Activated B cell treated with CpG ODN at 0.5 μM for 24 hours (primary cell): ENCODE measurements at regions of chr6 and their contacts with region 1.

Region 1: DNA sequence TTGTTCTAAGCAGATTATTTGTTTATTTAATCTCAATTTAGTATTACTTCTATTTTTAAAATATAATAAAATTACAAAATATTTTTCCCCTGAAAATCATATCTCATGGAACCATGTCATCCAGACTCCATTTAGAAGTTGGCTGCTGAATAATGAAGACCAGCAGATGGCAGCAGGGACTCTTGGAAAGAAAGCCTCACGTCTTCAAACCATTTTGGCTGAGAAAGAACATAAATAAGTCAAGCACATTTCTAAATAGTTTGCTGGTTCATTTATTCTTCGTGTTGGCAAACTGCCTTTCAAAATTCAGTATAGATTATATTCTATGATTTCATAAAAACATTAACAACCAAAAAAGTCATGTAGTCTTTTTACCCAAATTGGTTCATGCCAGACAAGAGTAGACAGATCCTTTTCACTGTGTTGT is 71.7 kb downstream of the RCAN2 start:
- DNase-seq: no peak
- ATAC-seq: no peak
- H3K4me3 Mint-ChIP-seq: no peak overlapping the region
- H3K27ac Mint-ChIP-seq: no peak overlapping the region
- H3K4me1 Mint-ChIP-seq: no peaks in the 10 kb centered on the region
- H3K27me3 Mint-ChIP-seq: peaks cover 10% of the 10 kb centered on the region
- CTCF ChIP-seq: no peak

Region 2: GRCh38 chr6:46437671-46438221 is 18.2 kb after region 1 on chr6:
- CTCF ChIA-PET with region 1: no interaction called
- POLR2A ChIA-PET with region 1: no interaction called
- intact Hi-C with region 1: no loop called
- DNase-seq: no peak
- ATAC-seq: no peak
- H3K4me3 Mint-ChIP-seq: no peak overlapping the region
- H3K27ac Mint-ChIP-seq: no peak overlapping the region
- H3K4me1 Mint-ChIP-seq: no peaks in the 10 kb centered on the region
- H3K27me3 Mint-ChIP-seq: peaks cover 5% of the 10 kb centered on the region
- CTCF ChIP-seq: no peak

Region 3: GRCh38 chr6:46626228-46626909 is 206.8 kb after region 1 on chr6:
- CTCF ChIA-PET with region 1: no interaction called
- POLR2A ChIA-PET with region 1: no interaction called
- intact Hi-C with region 1: loop called (anchors 1 kb)
- DNase-seq: no peak
- ATAC-seq: peak; percentile 54
- H3K4me3 Mint-ChIP-seq: no peak overlapping the region
- H3K27ac Mint-ChIP-seq: no peak overlapping the region
- H3K4me1 Mint-ChIP-seq: peaks cover 7% of the 10 kb centered on the region
- H3K27me3 Mint-ChIP-seq: peaks cover 4% of the 10 kb centered on the region
- CTCF ChIP-seq: no peak

Region 4: GRCh38 chr6:46781478-46782378 is 362.1 kb after region 1 on chr6:
- CTCF ChIA-PET with region 1: interaction called, 3 read pairs
- POLR2A ChIA-PET with region 1: no interaction called
- intact Hi-C with region 1: loop called (anchors 1 kb)
- DNase-seq: no peak
- ATAC-seq: no peak
- H3K4me3 Mint-ChIP-seq: no peak overlapping the region
- H3K27ac Mint-ChIP-seq: no peak overlapping the region
- H3K4me1 Mint-ChIP-seq: no peaks in the 10 kb centered on the region
- H3K27me3 Mint-ChIP-seq: no peaks in the 10 kb centered on the region
- CTCF ChIP-seq: no peak

Region 5: GRCh38 chr6:47047479-47048407 is 628.2 kb after region 1 on chr6:
- CTCF ChIA-PET with region 1: interaction called, 3 read pairs
- POLR2A ChIA-PET with region 1: no interaction called
- intact Hi-C with region 1: loop called (anchors 1 kb)
- DNase-seq: no peak
- ATAC-seq: no peak
- H3K4me3 Mint-ChIP-seq: no peak overlapping the region
- H3K27ac Mint-ChIP-seq: no peak overlapping the region
- H3K4me1 Mint-ChIP-seq: no peaks in the 10 kb centered on the region
- H3K27me3 Mint-ChIP-seq: peaks cover 7% of the 10 kb centered on the region
- CTCF ChIP-seq: no peak